ENCODE measurements at regions of chr4 and their contacts with region 1.

Region 1: DNA sequence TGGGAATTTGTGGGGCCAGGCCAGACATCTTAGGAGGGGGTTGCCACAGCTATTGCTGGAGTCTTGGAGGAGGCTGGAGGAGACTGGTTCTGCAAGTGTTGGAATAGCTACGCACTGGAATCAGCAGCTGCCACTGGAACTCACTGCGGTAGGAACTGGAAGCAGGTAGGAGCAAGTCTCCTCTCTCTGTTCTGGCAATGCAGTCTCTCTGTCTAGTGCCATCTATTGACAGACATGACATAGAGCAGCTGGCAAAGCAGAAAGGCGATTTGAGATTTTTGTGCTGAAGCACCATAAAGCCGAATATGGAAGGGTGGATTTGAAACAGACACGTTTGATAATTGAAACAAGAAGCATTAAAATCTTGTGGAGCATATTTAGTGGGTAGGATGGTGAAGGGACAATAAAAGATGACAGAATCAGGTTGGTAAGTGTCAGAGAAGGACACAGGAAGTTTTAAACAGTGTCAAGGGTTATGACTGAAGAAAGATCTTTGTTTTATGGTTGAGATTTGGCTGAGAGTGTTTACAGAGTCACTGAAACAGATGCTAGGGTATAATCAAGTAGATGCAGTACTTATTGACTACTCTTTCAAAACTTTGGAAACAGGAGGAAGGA is 23.5 kb upstream of the SYNPO2 start:
- DNase-seq: peak; percentile 13
- ATAC-seq: peak; percentile 37
- H3K4me3 Mint-ChIP-seq: no peak overlapping the region
- H3K27ac Mint-ChIP-seq: no peak overlapping the region
- H3K4me1 Mint-ChIP-seq: peaks cover 6% of the 10 kb centered on the region
- H3K27me3 Mint-ChIP-seq: no peaks in the 10 kb centered on the region
- CTCF ChIP-seq: peak; percentile 62

Region 2: GRCh38 chr4:118850488-118851173 is 14.6 kb before region 1 on chr4:
- CTCF ChIA-PET with region 1: interaction called, 42 read pairs
- POLR2A ChIA-PET with region 1: no interaction called
- intact Hi-C with region 1: no loop called
- DNase-seq: peak; percentile 48
- ATAC-seq: peak; percentile 93
- H3K4me3 Mint-ChIP-seq: peak overlapping the region; percentile 82
- H3K27ac Mint-ChIP-seq: peak overlapping the region; percentile 83
- H3K4me1 Mint-ChIP-seq: peaks cover 22% of the 10 kb centered on the region
- H3K27me3 Mint-ChIP-seq: peaks cover 5% of the 10 kb centered on the region
- CTCF ChIP-seq: no peak

Region 3: GRCh38 chr4:118939169-118939783 is 74.1 kb after region 1 on chr4:
- CTCF ChIA-PET with region 1: no interaction called
- POLR2A ChIA-PET with region 1: no interaction called
- intact Hi-C with region 1: no loop called
- DNase-seq: no peak
- ATAC-seq: no peak
- H3K4me3 Mint-ChIP-seq: no peak overlapping the region
- H3K27ac Mint-ChIP-seq: no peak overlapping the region
- H3K4me1 Mint-ChIP-seq: no peaks in the 10 kb centered on the region
- H3K27me3 Mint-ChIP-seq: peaks cover 13% of the 10 kb centered on the region
- CTCF ChIP-seq: no peak

Region 4: DNA sequence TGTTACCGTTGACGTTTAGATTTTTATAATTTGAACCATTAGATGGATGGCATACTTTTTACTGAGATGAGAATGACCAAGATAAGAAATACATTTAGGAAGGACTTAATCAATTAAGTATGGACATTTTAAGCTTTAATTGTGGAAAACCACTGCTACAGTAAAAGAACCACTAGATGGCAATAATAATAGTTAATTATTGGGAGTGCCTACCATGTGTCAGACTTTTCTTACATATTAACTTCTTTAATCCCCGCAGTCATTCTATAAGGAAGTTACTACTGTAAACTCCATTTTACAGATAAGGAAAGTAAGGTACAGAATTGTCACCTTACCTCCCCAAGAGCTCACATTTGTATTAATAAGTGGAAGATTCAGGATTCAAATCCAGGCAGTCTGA is 221.9 kb after region 1 on chr4:
- CTCF ChIA-PET with region 1: no interaction called
- POLR2A ChIA-PET with region 1: no interaction called
- intact Hi-C with region 1: no loop called
- DNase-seq: no peak
- ATAC-seq: no peak
- H3K4me3 Mint-ChIP-seq: no peak overlapping the region
- H3K27ac Mint-ChIP-seq: no peak overlapping the region
- H3K4me1 Mint-ChIP-seq: no peaks in the 10 kb centered on the region
- H3K27me3 Mint-ChIP-seq: no peaks in the 10 kb centered on the region
- CTCF ChIP-seq: no peak

Region 5: DNA sequence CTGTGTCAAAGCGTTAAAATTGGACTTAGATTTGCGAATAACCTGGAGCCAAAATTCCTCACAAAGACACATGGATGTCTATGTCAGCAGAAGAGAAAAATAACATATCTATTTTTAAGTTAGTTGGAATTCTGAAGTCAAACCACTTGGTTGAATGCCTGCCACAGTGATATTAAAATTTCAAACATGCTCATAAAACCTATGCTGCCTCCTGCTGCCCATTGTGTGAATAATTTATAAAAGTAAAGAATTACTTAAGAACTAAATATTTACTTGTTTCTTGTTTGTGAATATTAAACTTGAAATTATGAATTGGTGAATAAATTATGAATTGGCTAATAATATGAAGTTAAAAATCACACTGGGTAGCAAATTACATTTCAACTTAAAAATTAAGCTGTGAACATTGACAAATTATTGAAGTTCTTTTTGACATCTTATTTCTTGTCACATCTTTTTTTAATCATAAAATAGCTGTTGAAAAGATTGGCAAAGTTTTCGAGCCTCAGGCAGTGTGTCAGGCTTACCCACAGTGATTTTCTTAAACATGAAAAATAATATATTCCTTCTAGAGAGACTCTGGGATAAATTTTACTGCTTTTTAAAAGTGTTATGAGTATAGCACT is 421.3 kb after region 1 on chr4:
- CTCF ChIA-PET with region 1: no interaction called
- POLR2A ChIA-PET with region 1: no interaction called
- intact Hi-C with region 1: no loop called
- DNase-seq: peak; percentile 43
- ATAC-seq: peak; percentile 39
- H3K4me3 Mint-ChIP-seq: no peak overlapping the region
- H3K27ac Mint-ChIP-seq: no peak overlapping the region
- H3K4me1 Mint-ChIP-seq: peaks cover 19% of the 10 kb centered on the region
- H3K27me3 Mint-ChIP-seq: no peaks in the 10 kb centered on the region
- CTCF ChIP-seq: peak; percentile 74

Measured in activated CD8-positive, alpha-beta T cell treated with anti-CD3 and anti-CD28 coated beads for 36 hours (primary cell).